Psoas muscle (tissue), 8 donors: ENCODE measurements at regions of chr2 and their contacts with region 1.

Region 1: DNA sequence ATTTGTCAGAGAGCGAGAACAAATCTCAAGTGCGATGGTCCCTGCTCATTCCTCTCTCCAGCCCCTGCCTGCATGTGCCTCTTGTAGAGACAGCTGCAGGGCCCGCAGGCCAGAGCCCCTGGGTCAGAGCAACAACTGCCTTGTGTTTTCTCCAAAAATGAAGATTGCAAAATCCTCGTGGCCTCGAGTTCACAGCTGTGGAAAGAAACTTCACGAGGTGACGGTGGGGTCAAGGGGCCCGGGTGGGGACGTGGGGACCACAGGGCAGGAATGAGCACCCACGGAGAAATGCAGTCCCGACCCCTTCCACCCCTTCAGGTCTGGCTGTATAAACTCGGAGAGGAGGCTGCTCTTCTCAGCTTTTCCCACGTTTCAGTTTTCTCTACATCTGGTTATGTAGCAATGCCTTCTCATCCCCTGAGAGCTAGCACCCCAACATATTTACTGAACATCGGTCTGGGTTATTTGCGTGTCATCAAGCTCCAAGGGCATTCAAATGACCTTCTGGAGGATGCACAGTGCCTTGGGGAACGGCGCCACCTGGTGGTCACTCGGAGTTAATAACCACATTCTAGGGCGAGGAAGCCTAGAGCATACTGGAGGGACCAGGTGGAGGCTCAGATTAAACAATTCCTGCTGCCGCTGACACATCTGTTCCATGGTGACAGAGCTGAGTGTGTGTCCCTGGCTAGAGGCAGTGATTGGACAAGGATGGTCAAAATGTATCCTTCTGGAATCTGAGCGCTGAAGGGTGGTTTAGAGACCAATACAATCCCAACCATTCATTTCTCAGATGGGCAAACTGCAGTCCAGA is 91.4 kb upstream of the CYRIA start:
- DNase-seq: peak; percentile 77 to 90
- ATAC-seq: peak; percentile 92 to 97 (median 93)
- H3K4me3 ChIP-seq: no peak overlapping the region
- H3K27ac ChIP-seq: peak overlapping the region; percentile 0
- H3K4me1 ChIP-seq: no peaks in the 10 kb centered on the region
- H3K27me3 ChIP-seq: no peaks in the 10 kb centered on the region
- CTCF ChIP-seq: peak; percentile 95

Region 2: DNA sequence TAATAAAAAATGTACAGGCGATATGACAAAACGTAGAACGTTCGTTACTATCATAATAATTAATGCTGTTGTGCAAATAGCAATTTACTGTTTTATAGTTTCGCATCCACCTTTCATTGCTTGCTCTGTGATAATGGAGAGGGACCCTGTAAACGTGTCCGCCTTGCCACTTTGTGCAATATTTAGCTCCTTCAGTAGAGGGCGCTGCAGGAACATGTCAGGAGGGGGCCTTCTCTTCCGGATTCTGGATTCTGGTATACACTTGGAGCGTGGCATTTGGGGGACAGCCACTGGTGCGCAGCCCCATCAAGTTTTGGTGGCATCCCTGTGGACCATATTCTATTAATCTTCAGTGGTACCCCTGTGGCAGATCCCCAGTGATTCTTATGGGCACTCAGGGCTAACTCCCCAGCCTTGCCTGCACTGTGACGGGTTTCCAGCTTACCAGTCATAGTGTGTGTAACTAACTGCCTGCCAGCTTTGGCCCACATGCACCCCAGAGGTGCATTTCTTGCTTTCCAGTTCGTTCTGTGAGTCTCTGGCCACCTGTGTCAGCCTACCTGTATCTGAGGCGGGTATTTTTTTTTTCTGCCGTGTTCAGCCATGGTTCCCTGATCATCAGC is 231.7 kb before region 1 on chr2:
- intact Hi-C with region 1: loop called (anchors 10 kb)
- DNase-seq: peak in 1 of 2 donors; percentile 18
- ATAC-seq: peak; percentile 46 to 83 (median 70)
- H3K4me3 ChIP-seq: no peak overlapping the region
- H3K27ac ChIP-seq: no peak overlapping the region
- H3K4me1 ChIP-seq: peaks cover 3% of the 10 kb centered on the region
- H3K27me3 ChIP-seq: no peaks in the 10 kb centered on the region
- CTCF ChIP-seq: peak; percentile 43

Region 3: DNA sequence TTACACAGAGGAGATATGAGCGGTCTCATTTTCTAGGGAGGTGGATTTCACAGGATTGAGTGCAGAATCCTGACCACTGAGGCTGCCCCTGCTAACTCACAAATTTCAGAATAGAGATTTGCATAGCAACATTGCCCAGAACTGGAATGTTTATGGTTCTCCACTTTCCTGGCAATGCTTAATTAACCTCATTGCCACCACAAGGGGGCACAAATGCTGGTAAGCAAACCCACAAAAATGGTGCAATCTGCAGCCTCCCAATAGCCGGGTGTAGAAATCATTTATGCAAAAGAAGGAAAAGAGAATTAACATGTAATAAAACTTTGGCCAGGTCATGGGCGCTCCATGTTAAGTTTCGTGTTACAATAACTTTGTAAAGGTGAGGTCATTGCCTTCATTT is 203.8 kb before region 1 on chr2:
- intact Hi-C with region 1: loop called in 1 of 2 experiments (anchors 2 kb)
- DNase-seq: no peak
- ATAC-seq: peak in 3 of 4 donors; percentile 42 to 86 (median 63)
- H3K4me3 ChIP-seq: no peak overlapping the region
- H3K27ac ChIP-seq: no peak overlapping the region
- H3K4me1 ChIP-seq: peaks cover 4% of the 10 kb centered on the region
- H3K27me3 ChIP-seq: no peaks in the 10 kb centered on the region
- CTCF ChIP-seq: peak; percentile 61

Region 4: DNA sequence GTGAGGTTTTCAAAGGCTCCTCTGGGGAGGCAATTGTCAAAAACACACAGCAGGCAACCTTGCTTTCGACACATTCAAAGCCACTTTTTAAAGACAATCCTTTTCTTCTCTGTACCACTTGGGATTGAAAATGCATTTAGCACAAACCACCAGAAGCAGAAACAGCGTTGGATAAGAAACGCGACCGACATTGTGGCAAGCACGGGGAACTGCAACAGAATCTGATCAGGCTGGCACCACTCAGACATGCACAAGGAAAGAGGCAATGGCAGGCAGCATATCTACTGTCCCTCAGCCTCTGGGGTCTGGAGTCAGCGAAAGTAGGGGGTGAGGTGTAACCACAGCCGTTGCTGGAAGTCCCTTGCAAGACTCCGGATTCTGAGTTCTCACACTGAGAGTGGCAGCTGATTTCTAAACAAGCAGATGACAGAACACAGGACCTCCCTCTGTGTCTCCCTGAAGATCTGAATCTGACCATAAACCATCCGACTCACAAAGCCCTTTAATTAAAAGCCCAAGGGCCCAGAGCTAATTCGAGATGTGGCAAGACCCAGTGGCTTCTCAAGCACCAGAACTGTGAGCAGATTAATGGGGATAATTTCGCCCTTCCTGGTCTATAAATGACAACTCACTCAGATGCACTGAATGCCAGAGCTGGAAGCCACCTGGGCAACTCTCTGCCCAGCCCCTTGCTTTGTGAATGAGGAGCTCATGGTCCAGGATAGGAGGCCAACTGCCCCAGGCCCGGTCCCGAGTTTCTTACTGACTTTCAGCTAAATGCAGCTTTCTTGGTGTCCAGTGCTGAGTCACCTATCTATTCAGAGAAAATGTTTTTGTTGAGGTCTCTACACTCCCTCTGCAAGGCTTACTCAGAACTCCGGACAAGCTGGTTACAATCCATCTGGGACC is 121.0 kb before region 1 on chr2:
- intact Hi-C with region 1: loop called (anchors 5 kb)
- DNase-seq: no peak
- ATAC-seq: peak; percentile 22 to 68 (median 55)
- H3K4me3 ChIP-seq: no peak overlapping the region
- H3K27ac ChIP-seq: peak overlapping the region; percentile 61
- H3K4me1 ChIP-seq: peaks cover 73% of the 10 kb centered on the region
- H3K27me3 ChIP-seq: no peaks in the 10 kb centered on the region
- CTCF ChIP-seq: peak; percentile 14

Region 5: GRCh38 chr2:16821692-16822091 is 64.7 kb after region 1 on chr2:
- intact Hi-C with region 1: no loop called
- DNase-seq: no peak
- ATAC-seq: no peak
- H3K4me3 ChIP-seq: no peak overlapping the region
- H3K27ac ChIP-seq: no peak overlapping the region
- H3K4me1 ChIP-seq: no peaks in the 10 kb centered on the region
- H3K27me3 ChIP-seq: no peaks in the 10 kb centered on the region
- CTCF ChIP-seq: no peak